ENCODE measurements at regions of chr17 and their contacts with region 1.

Region 1: GRCh38 chr17:31279401-31279800 is 17.6 kb downstream of the OMG start:
- DNase-seq: no peak
- H3K4me3 ChIP-seq: no peak overlapping the region
- H3K27me3 ChIP-seq: no peaks in the 10 kb centered on the region
- CTCF ChIP-seq: no peak

Region 2: DNA sequence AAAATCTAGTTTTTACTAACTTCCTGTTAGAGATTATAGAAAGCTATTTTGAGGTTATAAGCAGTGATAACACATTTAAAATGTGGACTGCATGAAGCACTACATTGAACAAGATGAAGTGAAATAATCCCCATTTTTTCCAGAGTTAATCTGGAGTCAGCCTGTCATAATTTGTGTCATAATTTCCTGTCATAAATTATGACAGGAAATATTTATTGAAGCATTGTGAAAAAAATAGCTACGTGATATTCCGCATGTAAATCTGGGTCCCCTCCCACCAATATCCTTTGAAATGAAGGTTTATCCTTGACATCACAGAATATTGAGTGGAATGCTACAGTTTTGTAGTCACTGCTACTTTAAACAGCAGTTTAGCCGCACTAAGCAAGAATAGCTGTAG is 22.5 kb before region 1 on chr17:
- CTCF ChIA-PET with region 1: no interaction called
- POLR2A ChIA-PET with region 1: interaction called, 15 read pairs
- DNase-seq: no peak
- H3K4me3 ChIP-seq: no peak overlapping the region
- H3K27me3 ChIP-seq: no peaks in the 10 kb centered on the region
- CTCF ChIP-seq: no peak

Region 3: DNA sequence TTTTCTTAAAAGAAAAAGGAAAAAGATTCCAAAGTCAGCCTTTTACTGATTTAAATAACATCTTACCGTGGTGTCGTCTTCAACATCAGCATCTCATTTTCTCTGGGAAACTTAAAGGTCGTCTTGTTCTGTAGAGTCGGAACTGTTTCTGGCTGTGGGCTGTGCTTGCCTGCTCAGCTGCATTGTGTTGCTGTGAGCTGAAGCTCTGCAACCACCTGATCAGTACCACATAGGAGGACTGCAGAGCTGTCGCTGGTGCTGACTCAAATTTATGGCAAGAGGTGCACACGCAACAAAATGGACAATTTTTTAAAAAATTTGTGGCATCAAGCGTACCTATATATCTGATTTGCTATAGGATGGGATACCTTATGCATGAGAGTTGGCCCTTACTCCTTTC is 17.7 kb after region 1 on chr17 and contains the start of gene OMG:
- CTCF ChIA-PET with region 1: no interaction called
- POLR2A ChIA-PET with region 1: no interaction called
- DNase-seq: no peak
- H3K4me3 ChIP-seq: no peak within 1 kb of the TSS
- H3K27me3 ChIP-seq: no peaks in the 10 kb centered on the region
- CTCF ChIP-seq: no peak
- polyA plus RNA-seq, gene OMG: 0.13 and 0.21 TPM in 2 replicates

Region 4: GRCh38 chr17:31308372-31309334 is 29.3 kb after region 1 on chr17:
- CTCF ChIA-PET with region 1: no interaction called
- POLR2A ChIA-PET with region 1: interaction called, 14 read pairs
- DNase-seq: no peak
- H3K4me3 ChIP-seq: no peak overlapping the region
- H3K27me3 ChIP-seq: no peaks in the 10 kb centered on the region
- CTCF ChIP-seq: no peak

Measured in BJ (cell line).